CD14-positive monocyte (primary cell): ENCODE measurements at regions of chr12 and their contacts with region 1.

Region 1: GRCh38 chr12:14803011-14803829 is at the starts of genes C12orf60 and WBP11:
- DNase-seq: peak; percentile 95 to 99 (median 96)
- H3K4me3 ChIP-seq: peak within 1 kb of the TSS; percentile 78 to 92 (median 90)
- H3K4me3 Mint-ChIP-seq: no peak within 1 kb of the TSS
- H3K27ac ChIP-seq: peak within 1 kb of the TSS; percentile 92 to 99
- H3K27ac Mint-ChIP-seq: no peak within 1 kb of the TSS
- H3K4me1 ChIP-seq: peaks cover 24 to 34% of the 10 kb centered on the region in 2 donors
- H3K4me1 Mint-ChIP-seq: peaks cover 23% of the 10 kb centered on the region
- H3K27me3 ChIP-seq: no peaks in the 10 kb centered on the region
- H3K27me3 Mint-ChIP-seq: peaks cover 0 to 2% (median 0%) of the 10 kb centered on the region in 3 donors
- CTCF ChIP-seq: no peak
- polyA plus RNA-seq, gene C12orf60: 0.11 to 0.46 TPM in 2 of 3 donors, not detected in the other
- polyA plus RNA-seq, gene WBP11: 20.5 to 46.2 (median 29.2) TPM

Region 2: GRCh38 chr12:14769969-14770495 is 33.2 kb before region 1 on chr12:
- intact Hi-C with region 1: loop called (anchors 1 to 5 kb)
- DNase-seq: peak; percentile 72 to 86 (median 77)
- H3K4me3 ChIP-seq: peak overlapping the region; percentile 87 to 96 (median 90)
- H3K4me3 Mint-ChIP-seq: peak overlapping the region; percentile 96 to 98
- H3K27ac ChIP-seq: peak overlapping the region; percentile 96 to 98
- H3K27ac Mint-ChIP-seq: peak overlapping the region; percentile 98 to 99 (median 98)
- H3K4me1 ChIP-seq: peaks cover 30 to 39% of the 10 kb centered on the region in 2 donors
- H3K4me1 Mint-ChIP-seq: peaks cover 44% of the 10 kb centered on the region
- H3K27me3 ChIP-seq: no peaks in the 10 kb centered on the region
- H3K27me3 Mint-ChIP-seq: peaks cover 0 to 3% (median 1%) of the 10 kb centered on the region in 3 donors
- CTCF ChIP-seq: peak; percentile 92